ENCODE measurements at regions of chr6 and their contacts with region 1.

Region 1: DNA sequence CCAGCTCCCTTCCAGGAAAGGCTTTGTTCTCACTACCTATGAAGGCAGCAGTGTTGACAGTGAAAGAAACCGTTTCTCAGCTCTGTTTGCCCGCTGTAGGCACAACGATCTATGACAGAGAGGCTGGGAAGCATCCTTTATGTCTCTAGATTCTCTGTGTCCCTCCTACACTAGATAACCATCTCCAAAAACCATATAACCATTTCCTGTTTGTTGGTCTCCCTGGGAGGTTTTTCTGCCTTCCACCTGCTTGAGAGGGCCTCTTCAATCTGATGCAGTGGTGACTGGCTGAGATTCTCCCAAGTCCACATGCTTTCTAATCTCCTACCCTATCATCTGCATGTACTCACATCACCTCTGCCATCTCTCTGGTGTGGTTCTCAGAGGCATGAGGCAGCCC is 32.0 kb upstream of the TMEM217 start:
- DNase-seq: peak; percentile 73
- ATAC-seq: peak; percentile 91
- H3K4me3 Mint-ChIP-seq: peak overlapping the region; percentile 4
- H3K27ac Mint-ChIP-seq: peak overlapping the region; percentile 85
- H3K4me1 Mint-ChIP-seq: peaks cover 45% of the 10 kb centered on the region
- H3K27me3 Mint-ChIP-seq: no peaks in the 10 kb centered on the region

Region 2: GRCh38 chr6:37192666-37193065 is 97.3 kb before region 1 on chr6:
- CTCF ChIA-PET with region 1: no interaction called
- POLR2A ChIA-PET with region 1: no interaction called
- DNase-seq: no peak
- ATAC-seq: peak; percentile 13
- H3K4me3 Mint-ChIP-seq: no peak overlapping the region
- H3K27ac Mint-ChIP-seq: peak overlapping the region; percentile 74
- H3K4me1 Mint-ChIP-seq: peaks cover 53% of the 10 kb centered on the region
- H3K27me3 Mint-ChIP-seq: no peaks in the 10 kb centered on the region

Region 3: GRCh38 chr6:37257634-37258404 is 32.1 kb before region 1 on chr6 and contains the starts of genes TBC1D22B and TMEM217:
- CTCF ChIA-PET with region 1: interaction called, 3 read pairs
- POLR2A ChIA-PET with region 1: interaction called, 13 read pairs
- DNase-seq: peak; percentile 98
- ATAC-seq: peak; percentile 100
- H3K4me3 Mint-ChIP-seq: peak within 1 kb of the TSS; percentile 93
- H3K27ac Mint-ChIP-seq: peak within 1 kb of the TSS; percentile 78
- H3K4me1 Mint-ChIP-seq: peaks cover 48% of the 10 kb centered on the region
- H3K27me3 Mint-ChIP-seq: no peaks in the 10 kb centered on the region
- total RNA-seq, gene TBC1D22B: 15.4 TPM
- total RNA-seq, gene TMEM217: 3.1 to 3.2 TPM

Region 4: GRCh38 chr6:37303932-37304363 is 14.0 kb after region 1 on chr6:
- CTCF ChIA-PET with region 1: interaction called, 11 read pairs
- POLR2A ChIA-PET with region 1: interaction called, 3 read pairs
- DNase-seq: peak; percentile 33
- ATAC-seq: no peak
- H3K4me3 Mint-ChIP-seq: no peak overlapping the region
- H3K27ac Mint-ChIP-seq: no peak overlapping the region
- H3K4me1 Mint-ChIP-seq: peaks cover 9% of the 10 kb centered on the region
- H3K27me3 Mint-ChIP-seq: no peaks in the 10 kb centered on the region

Region 5: GRCh38 chr6:37339741-37340638 is 50.1 kb after region 1 on chr6:
- CTCF ChIA-PET with region 1: no interaction called
- POLR2A ChIA-PET with region 1: no interaction called
- DNase-seq: no peak
- ATAC-seq: no peak
- H3K4me3 Mint-ChIP-seq: no peak overlapping the region
- H3K27ac Mint-ChIP-seq: no peak overlapping the region
- H3K4me1 Mint-ChIP-seq: peaks cover 5% of the 10 kb centered on the region
- H3K27me3 Mint-ChIP-seq: peaks cover 16% of the 10 kb centered on the region